ENCODE measurements at regions of chr3 and their contacts with region 1.

Region 1: DNA sequence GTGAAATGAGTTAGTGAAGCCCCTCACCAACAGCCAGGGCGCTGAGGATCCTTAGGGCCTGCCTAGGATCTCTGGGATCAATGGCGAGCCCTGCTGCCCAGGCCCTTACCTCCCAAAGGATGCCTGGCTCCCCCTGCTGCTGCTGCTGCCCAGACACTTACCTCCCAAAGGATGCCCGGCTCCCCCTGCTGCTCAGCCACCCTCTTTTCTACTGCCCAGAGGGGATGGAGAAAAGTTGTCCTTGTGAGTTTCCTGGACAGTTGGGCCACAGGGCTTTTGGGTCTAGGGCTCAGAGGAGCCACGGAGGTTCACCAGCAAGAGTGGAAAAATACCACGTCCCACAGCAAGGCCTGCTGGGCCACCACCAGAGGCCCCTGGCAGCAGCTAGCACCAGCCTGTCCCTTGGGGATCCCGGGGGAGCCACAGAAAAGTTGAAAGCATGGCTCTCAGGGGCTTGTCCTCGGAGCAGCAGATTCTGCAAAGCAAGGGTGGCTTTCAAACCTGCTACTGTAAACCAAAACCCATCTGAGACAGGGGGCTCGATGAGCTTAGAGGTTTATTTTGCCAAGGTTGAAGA is 59.4 kb downstream of the SLC6A6 start:
- DNase-seq: no peak
- H3K4me3 ChIP-seq: no peak overlapping the region
- CTCF ChIP-seq: no peak
- POLR2A ChIP-seq: no peak

Region 2: GRCh38 chr3:14234251-14235002 is 227.4 kb before region 1 on chr3:
- intact Hi-C with region 1: no loop called
- DNase-seq: peak; percentile 74 to 89
- H3K4me3 ChIP-seq: no peak overlapping the region
- CTCF ChIP-seq: no peak
- POLR2A ChIP-seq: no peak

Region 3: GRCh38 chr3:14266361-14266760 is 195.5 kb before region 1 on chr3:
- intact Hi-C with region 1: loop called (anchors 5 kb)
- DNase-seq: no peak
- H3K4me3 ChIP-seq: no peak overlapping the region
- CTCF ChIP-seq: no peak
- POLR2A ChIP-seq: no peak

Measured in lower leg skin (tissue), 4 donors.